ENCODE measurements at regions of chr4 and their contacts with region 1.

Region 1: GRCh38 chr4:82462415-82462831 is 32.0 kb downstream of the ENOPH1 start:
- DNase-seq: peak; percentile 85
- ATAC-seq: peak; percentile 91

Region 2: GRCh38 chr4:82415922-82416365 is 46.5 kb before region 1 on chr4:
- intact Hi-C with region 1: no loop called
- DNase-seq: no peak
- ATAC-seq: no peak

Region 3: DNA sequence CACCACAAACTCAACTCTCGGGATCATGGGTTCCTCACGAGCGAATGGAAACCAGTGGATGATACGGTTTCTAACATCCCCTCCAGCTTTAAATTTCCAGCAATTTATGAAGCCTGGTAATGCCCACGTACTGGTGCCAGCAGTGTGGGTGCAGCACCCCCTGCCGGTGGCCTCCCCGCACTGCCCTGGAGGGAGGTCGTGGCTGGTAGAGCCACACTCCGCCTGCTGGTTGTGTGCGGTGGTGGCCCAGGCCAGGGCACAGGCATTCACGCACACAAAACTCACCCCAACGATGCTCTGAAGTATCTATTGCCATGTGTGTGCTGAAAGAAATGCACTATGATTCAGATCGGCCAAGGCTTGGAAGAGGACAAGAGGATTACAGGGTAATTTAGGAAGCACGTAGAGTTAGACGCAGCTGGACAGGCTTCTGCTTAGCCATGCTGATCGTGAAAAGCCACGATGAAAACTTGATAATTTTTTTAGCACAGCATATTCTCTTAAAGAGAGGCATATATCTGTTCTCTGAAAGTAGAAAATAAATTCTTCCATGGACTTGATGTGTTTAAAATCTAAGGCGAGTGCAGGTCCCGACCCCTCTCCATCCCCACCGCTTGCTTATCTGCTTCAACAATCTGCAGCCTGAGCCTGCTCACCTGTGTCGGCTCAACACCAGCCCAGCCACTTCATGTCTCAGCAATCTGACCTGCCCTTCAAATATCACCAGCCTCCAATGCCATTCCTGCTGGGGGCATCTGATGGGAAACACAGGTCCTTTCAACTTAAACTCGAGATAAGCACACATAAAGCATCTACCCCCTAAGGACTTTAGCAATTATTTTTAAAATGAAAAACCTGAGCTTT is 277.1 kb after region 1 on chr4:
- intact Hi-C with region 1: loop called (anchors 10 kb)
- DNase-seq: peak; percentile 78
- ATAC-seq: peak; percentile 92